A673 (cell line): ENCODE measurements at regions of chr7 and their contacts with region 1.

Region 1: DNA sequence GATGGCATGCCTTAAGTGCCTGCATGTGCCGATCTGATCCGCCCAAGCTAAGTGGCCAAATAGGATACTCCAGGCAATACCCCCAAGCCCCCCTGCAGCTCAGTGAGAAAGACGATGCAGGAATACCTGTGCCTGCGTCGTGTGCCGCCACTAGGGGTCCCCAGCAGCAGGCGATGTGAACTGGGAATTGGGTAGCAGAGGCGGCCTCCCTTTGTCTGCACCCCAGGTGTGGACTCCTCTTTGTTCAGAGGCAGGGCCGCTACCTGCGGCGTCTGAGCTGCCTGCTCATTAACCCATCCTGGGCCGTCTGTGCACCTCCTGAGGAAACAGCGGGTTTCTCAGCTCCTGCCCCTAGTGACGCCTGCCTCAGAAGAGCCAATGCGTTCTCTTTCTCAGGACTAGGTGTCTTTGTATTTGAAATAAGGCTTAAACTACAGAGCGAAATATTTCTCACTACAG is 4.8 kb upstream of the CHN2 start:
- DNase-seq: peak; percentile 89
- H3K4me3 ChIP-seq: peak overlapping the region; percentile 23
- H3K27ac ChIP-seq: peak overlapping the region; percentile 90
- H3K4me1 ChIP-seq: peaks cover 55% of the 10 kb centered on the region
- H3K27me3 ChIP-seq: no peaks in the 10 kb centered on the region
- CTCF ChIP-seq: peak; percentile 98

Region 2: DNA sequence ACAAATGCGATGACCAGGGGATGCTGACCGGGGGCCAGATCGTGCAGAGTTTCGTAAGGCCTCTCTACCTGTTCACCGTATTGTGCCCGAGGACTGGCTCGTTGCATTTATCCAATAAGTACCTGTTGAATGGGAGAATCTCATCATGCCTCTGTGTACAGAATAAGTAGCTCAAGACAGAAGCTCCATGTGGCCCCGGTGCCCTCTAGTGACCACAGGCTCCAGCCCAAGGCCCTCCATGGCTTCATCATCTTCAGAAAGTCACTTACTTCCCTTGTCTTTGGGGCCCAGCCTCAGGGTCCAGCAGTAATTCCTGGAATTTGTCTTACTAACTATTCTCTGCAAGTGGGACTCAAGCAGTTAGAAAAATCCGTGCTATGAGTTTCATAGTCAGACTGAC is 155.8 kb after region 1 on chr7:
- CTCF ChIA-PET with region 1: no interaction called
- POLR2A ChIA-PET with region 1: no interaction called
- intact Hi-C with region 1: loop called (anchors 10 kb)
- DNase-seq: peak; percentile 49
- H3K4me3 ChIP-seq: no peak overlapping the region
- H3K27ac ChIP-seq: peak overlapping the region; percentile 45
- H3K4me1 ChIP-seq: peaks cover 74% of the 10 kb centered on the region
- H3K27me3 ChIP-seq: no peaks in the 10 kb centered on the region
- CTCF ChIP-seq: peak; percentile 44

Region 3: DNA sequence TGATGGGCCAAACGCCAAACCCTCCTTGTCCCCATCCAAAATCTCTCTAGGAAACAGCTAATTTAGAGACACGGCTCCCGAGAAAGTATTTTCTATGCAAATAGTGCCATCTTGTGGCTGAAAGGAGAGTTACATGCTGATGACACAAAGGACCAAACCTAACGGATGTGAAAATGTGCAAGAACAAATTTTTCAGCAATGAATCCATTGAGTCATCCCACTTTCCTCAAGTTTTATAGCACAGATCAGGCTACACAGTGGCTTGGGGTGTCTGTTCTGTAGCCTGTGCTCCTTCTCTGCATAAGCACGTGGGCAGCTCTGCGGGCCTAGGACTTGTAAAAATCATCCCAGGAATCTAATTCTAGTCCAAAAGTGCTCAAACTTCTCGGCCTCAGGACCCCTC is 219.1 kb after region 1 on chr7:
- CTCF ChIA-PET with region 1: interaction called, 16 read pairs
- POLR2A ChIA-PET with region 1: no interaction called
- intact Hi-C with region 1: loop called (anchors 2 kb)
- DNase-seq: peak; percentile 95
- H3K4me3 ChIP-seq: no peak overlapping the region
- H3K27ac ChIP-seq: peak overlapping the region; percentile 60
- H3K4me1 ChIP-seq: peaks cover 35% of the 10 kb centered on the region
- H3K27me3 ChIP-seq: no peaks in the 10 kb centered on the region
- CTCF ChIP-seq: peak; percentile 84